A673 (cell line): ENCODE measurements at regions of chr13 and their contacts with region 1.

Region 1: DNA sequence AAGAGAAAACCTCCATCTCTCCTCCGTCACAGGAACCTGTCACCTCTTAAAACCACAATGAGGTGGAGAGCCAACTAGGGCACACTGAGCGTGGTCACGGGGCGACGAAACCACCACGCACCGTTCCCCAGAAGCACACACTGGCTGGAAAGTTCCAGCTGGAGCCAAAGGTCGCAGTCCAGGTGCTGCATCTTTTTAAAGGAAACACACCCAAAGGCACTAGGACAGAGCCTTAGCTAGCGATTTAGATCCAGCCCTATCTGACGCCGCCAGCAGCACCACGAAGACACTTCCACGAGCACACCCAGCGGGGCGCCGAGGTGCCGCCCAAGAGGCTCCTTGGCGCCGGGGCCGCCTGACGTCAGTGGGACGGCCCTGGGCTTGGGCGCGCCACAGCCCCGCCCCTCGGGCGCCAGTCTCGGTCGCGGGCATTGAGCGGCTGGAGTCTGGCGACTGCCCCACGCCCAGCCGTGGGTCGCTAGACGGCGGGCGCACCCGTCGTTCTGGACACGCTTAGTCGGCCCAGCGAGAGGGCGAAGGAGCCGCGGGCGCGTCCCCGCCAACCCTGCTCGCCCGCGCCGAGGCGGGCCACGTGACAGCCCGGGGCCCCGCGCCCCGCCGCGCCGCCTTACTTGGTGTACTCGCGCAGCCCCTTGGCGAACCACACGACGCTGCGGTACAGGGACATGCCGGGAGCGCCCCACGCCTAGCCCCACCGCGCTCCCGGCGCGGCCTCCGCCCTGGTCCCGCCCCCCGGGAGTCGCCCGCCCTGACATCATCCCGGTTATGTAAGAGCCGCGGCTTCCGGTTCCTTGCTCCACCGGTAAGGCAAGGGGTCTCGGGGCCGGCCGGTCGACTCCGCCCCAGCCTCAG is at the start of gene DHRS12:
- DNase-seq: peak; percentile 93
- H3K4me3 ChIP-seq: peak within 1 kb of the TSS; percentile 69
- H3K27ac ChIP-seq: peak within 1 kb of the TSS; percentile 96
- H3K4me1 ChIP-seq: peaks cover 21% of the 10 kb centered on the region
- H3K27me3 ChIP-seq: no peaks in the 10 kb centered on the region
- CTCF ChIP-seq: no peak
- total RNA-seq, gene DHRS12: 2.8 and 3.1 TPM in 2 replicates

Region 2: GRCh38 chr13:51148952-51149573 is 654.6 kb before region 1 on chr13:
- CTCF ChIA-PET with region 1: no interaction called
- POLR2A ChIA-PET with region 1: no interaction called
- intact Hi-C with region 1: loop called (anchors 10 kb)
- DNase-seq: peak; percentile 90
- H3K4me3 ChIP-seq: peak overlapping the region; percentile 17
- H3K27ac ChIP-seq: peak overlapping the region; percentile 91
- H3K4me1 ChIP-seq: peaks cover 22% of the 10 kb centered on the region
- H3K27me3 ChIP-seq: no peaks in the 10 kb centered on the region
- CTCF ChIP-seq: peak; percentile 85